BJ (cell line): ENCODE measurements at regions of chr16 and their contacts with region 1.

Region 1: DNA sequence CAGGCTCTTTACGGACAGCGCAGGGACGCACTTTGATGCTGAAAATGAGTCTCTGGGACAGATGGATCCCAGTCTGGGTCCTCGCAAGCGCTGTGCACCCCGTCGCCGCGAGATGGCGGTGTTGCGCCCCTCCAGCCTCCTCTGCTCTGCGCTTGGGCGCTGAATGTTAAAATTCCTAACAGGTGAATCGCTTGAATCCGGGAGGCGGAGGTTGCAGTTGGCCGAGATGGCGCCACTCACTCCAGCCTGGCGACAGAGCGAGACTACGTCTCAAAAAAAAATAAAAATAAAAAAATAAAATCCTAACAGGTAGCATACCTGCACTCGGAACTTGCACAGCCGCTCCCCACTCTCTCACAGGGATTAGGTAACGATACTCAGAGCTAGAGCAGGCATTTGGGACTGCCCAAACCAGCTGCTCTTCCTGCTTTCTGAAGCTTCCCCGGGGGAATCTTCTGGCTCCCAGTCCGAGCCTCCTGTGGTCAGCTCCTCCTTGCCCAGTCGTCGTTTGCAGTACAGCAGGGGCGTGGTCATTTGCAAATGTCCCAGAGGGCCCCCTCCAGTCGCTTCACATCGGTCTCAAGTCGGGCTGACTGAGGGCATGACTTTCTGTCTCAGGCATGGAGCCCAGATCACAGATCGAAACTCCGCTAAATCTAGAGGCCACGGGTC is 26.2 kb upstream of the OSGIN1 start:
- DNase-seq: peak; percentile 7
- H3K4me3 ChIP-seq: no peak overlapping the region
- H3K27me3 ChIP-seq: no peaks in the 10 kb centered on the region
- CTCF ChIP-seq: peak; percentile 99

Region 2: DNA sequence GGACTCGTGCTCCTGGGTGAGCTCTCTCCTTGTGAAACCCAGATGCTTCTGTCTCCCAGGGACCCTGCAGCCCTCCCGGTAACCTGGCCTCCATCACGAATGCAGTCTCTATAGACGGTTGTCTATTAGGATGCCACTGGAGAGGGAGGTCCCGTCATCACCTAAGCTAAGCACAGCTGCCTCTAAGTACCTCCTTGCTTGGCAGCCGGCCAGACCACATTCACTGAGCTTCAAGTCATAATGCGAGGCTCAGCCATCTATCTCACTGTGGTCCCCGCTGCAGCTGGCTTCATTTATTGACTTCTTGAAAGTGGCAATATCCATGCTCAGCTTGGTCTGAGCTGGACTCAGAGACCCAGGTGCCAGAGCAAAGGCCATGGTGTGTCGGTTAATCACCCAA is 193.6 kb before region 1 on chr16:
- CTCF ChIA-PET with region 1: no interaction called
- POLR2A ChIA-PET with region 1: no interaction called
- DNase-seq: no peak
- H3K4me3 ChIP-seq: no peak overlapping the region
- H3K27me3 ChIP-seq: no peaks in the 10 kb centered on the region
- CTCF ChIP-seq: no peak

Region 3: DNA sequence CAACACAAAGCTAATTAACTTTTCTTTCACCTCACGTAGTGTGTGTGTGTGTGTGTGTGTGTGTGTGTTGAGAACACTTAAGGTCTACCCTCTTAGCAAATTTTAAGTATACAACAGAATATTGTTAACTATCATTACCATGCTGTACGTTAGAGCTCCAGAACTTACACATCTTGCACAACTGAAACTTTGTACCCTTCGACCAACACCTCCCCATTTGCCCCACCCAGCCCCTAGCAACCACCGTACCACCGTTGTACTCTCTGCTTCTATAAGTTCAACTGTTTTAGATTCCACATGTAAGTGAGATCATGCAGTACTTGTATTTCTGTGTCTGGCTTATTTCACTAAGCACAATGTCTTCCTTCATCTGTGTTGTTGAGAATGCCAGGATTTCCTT is 56.0 kb before region 1 on chr16:
- CTCF ChIA-PET with region 1: no interaction called
- POLR2A ChIA-PET with region 1: no interaction called
- DNase-seq: no peak
- H3K4me3 ChIP-seq: no peak overlapping the region
- H3K27me3 ChIP-seq: peaks cover 1% of the 10 kb centered on the region; the same call in 1 of the 2 replicates
- CTCF ChIP-seq: no peak

Region 4: GRCh38 chr16:83913245-83913633 is 13.6 kb before region 1 on chr16:
- CTCF ChIA-PET with region 1: interaction called, 46 read pairs
- POLR2A ChIA-PET with region 1: interaction called, 4 read pairs
- DNase-seq: no peak
- H3K4me3 ChIP-seq: no peak overlapping the region
- H3K27me3 ChIP-seq: no peaks in the 10 kb centered on the region
- CTCF ChIP-seq: no peak

Region 5: DNA sequence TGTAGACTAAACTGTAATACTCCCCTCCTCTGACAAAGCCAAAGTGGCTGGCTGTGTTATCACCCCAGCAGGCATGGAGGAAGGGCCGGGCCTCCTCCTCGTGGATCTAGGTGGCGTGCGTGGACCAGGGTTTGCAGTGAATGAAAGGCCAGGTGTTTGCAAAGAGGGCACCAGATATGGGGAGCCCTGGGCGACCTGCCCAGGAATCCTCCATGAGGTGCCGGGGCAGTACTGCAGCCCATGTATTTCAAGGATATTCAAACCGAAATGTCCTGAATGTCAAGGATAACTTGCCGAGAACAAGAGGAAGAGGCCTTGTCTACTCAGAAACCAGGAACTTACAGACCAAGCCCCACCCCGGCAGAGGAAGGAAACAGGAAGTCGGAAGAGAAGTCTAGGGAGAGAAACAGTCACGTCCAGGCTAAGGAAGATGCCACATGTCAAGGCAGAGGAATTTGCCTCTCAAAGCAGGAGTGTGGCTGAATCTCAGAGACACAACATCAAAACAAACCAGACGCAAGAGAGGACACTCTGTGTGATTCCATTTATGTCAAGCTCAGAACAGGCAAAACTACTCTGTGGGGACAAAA is 12.5 kb after region 1 on chr16:
- CTCF ChIA-PET with region 1: interaction called, 27 read pairs
- POLR2A ChIA-PET with region 1: no interaction called
- DNase-seq: no peak
- H3K4me3 ChIP-seq: no peak overlapping the region
- H3K27me3 ChIP-seq: no peaks in the 10 kb centered on the region
- CTCF ChIP-seq: no peak

Region 6: GRCh38 chr16:83952940-83953795 is 26.3 kb after region 1 on chr16 and contains the start of gene OSGIN1:
- CTCF ChIA-PET with region 1: interaction called, 26 read pairs
- POLR2A ChIA-PET with region 1: no interaction called
- DNase-seq: peak; percentile 54
- H3K4me3 ChIP-seq: peak within 1 kb of the TSS; percentile 55
- H3K27me3 ChIP-seq: no peaks in the 10 kb centered on the region
- CTCF ChIP-seq: no peak
- polyA plus RNA-seq, gene OSGIN1: 2.0 and 5.1 TPM in 2 replicates